IMR-90 (cell line): ENCODE measurements at regions of chr15 and their contacts with region 1.

Region 1: GRCh38 chr15:66491846-66492245 is 5.7 kb downstream of the SNAPC5 start:
- DNase-seq: no peak
- ATAC-seq: no peak
- H3K4me3 ChIP-seq: no peak overlapping the region
- H3K27ac ChIP-seq: no peak overlapping the region
- H3K4me1 ChIP-seq: no peaks in the 10 kb centered on the region; the same call in 1 of the 2 replicates
- H3K27me3 ChIP-seq: no peaks in the 10 kb centered on the region
- CTCF ChIP-seq: no peak
- POLR2A ChIP-seq: no peak
- RAD21 ChIP-seq: no peak

Region 2: GRCh38 chr15:66386204-66387123 is 105.4 kb before region 1 on chr15 and contains the start of gene MAP2K1:
- CTCF ChIA-PET with region 1: no interaction called
- POLR2A ChIA-PET with region 1: no interaction called
- dilution Hi-C with region 1: no loop called
- in situ Hi-C with region 1: loop called (anchors 5 kb)
- intact Hi-C with region 1: loop called (anchors 1 kb)
- DNase-seq: peak; percentile 96
- ATAC-seq: peak; percentile 98
- H3K4me3 ChIP-seq: peak within 1 kb of the TSS; percentile 79
- H3K27ac ChIP-seq: peak within 1 kb of the TSS; percentile 85
- H3K4me1 ChIP-seq: peaks cover 6% of the 10 kb centered on the region
- H3K27me3 ChIP-seq: no peaks in the 10 kb centered on the region
- CTCF ChIP-seq: peak; percentile 82
- POLR2A ChIP-seq: peak; percentile 93
- RAD21 ChIP-seq: peak; percentile 37
- total RNA-seq, gene MAP2K1: 37.8 and 58.9 TPM in 2 replicates